ENCODE measurements at regions of chr19 and their contacts with region 1.

Region 1: DNA sequence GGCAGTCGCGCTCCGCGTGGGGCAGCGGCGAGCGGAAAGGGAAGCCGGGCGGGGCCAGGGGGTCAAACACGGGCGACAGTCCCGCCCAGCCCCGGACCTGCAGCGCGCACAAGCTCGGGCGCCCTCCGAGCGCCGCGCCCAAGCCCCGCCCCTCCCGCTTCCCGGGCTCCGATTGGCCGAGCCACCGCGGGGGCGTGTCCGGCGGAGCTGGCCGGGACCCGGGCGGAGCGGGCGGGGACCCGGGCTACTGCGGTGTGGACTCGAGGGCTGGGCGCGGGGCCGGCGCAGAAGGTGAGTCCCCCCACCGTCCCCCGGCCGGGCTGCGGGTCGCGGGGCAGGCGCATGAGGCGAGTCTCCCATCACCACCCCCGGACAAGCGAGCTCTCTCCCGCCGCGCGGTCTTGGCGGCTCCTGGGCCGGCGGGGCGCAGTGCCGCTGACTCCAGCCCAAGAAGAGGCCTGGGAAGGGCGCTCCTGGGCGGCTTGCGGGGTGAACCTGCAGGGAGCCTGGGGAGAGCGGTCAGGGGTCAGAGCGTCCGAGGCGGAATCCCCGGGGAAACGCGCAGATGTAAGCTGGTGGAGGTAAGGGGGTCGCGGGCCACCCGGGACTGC is at the start of gene PLEKHF1:
- DNase-seq: peak; percentile 99
- H3K4me3 Mint-ChIP-seq: peak within 1 kb of the TSS; percentile 95
- H3K27ac Mint-ChIP-seq: peak within 1 kb of the TSS; percentile 94
- H3K4me1 Mint-ChIP-seq: peaks cover 63% of the 10 kb centered on the region
- H3K27me3 Mint-ChIP-seq: no peaks in the 10 kb centered on the region
- total RNA-seq, gene PLEKHF1: 24.0 and 26.7 TPM in 2 replicates

Region 2: GRCh38 chr19:29622138-29623070 is 42.9 kb before region 1 on chr19:
- intact Hi-C with region 1: loop called (anchors 2 kb)
- DNase-seq: peak; percentile 73
- H3K4me3 Mint-ChIP-seq: peak overlapping the region; percentile 6
- H3K27ac Mint-ChIP-seq: peak overlapping the region; percentile 45
- H3K4me1 Mint-ChIP-seq: peaks cover 49% of the 10 kb centered on the region
- H3K27me3 Mint-ChIP-seq: no peaks in the 10 kb centered on the region

Region 3: GRCh38 chr19:29687244-29687896 is 22.1 kb after region 1 on chr19:
- intact Hi-C with region 1: loop called (anchors 1 kb)
- DNase-seq: peak; percentile 65
- H3K4me3 Mint-ChIP-seq: peak overlapping the region; percentile 49
- H3K27ac Mint-ChIP-seq: peak overlapping the region; percentile 90
- H3K4me1 Mint-ChIP-seq: peaks cover 44% of the 10 kb centered on the region
- H3K27me3 Mint-ChIP-seq: no peaks in the 10 kb centered on the region

Region 4: GRCh38 chr19:29694669-29695627 is 29.6 kb after region 1 on chr19:
- intact Hi-C with region 1: loop called (anchors 1 kb)
- DNase-seq: peak; percentile 95
- H3K4me3 Mint-ChIP-seq: no peak overlapping the region
- H3K27ac Mint-ChIP-seq: peak overlapping the region; percentile 34
- H3K4me1 Mint-ChIP-seq: peaks cover 17% of the 10 kb centered on the region
- H3K27me3 Mint-ChIP-seq: no peaks in the 10 kb centered on the region